CD8-positive, alpha-beta T cell (primary cell): ENCODE measurements at regions of chr21 and their contacts with region 1.

Region 1: GRCh38 chr21:42496122-42496900 is at the start of gene RSPH1:
- DNase-seq: peak; percentile 99 to 100 (median 99)
- ATAC-seq: peak; percentile 96
- H3K4me3 ChIP-seq: peak within 1 kb of the TSS; percentile 70 to 78
- H3K4me3 Mint-ChIP-seq: peak within 1 kb of the TSS; percentile 88
- H3K27ac ChIP-seq: peak within 1 kb of the TSS; percentile 78 to 81
- H3K27ac Mint-ChIP-seq: peak within 1 kb of the TSS; percentile 79
- H3K4me1 ChIP-seq: peaks cover 12% of the 10 kb centered on the region
- H3K4me1 Mint-ChIP-seq: peaks cover 11% of the 10 kb centered on the region
- H3K27me3 ChIP-seq: no peaks in the 10 kb centered on the region
- H3K27me3 Mint-ChIP-seq: no peaks in the 10 kb centered on the region
- CTCF ChIP-seq: no peak
- total RNA-seq, gene RSPH1: 0.16 TPM in 1 of 2 experiments, not detected in the other

Region 2: GRCh38 chr21:42400525-42400924 is 95.8 kb before region 1 on chr21:
- CTCF ChIA-PET with region 1: no interaction called
- POLR2A ChIA-PET with region 1: interaction called, 3 read pairs
- intact Hi-C with region 1: loop called in 1 of 2 experiments (anchors 1 kb)
- DNase-seq: peak in 1 of 9 experiments; percentile 60
- ATAC-seq: no peak
- H3K4me3 ChIP-seq: no peak overlapping the region
- H3K4me3 Mint-ChIP-seq: no peak overlapping the region
- H3K27ac ChIP-seq: no peak overlapping the region
- H3K27ac Mint-ChIP-seq: no peak overlapping the region
- H3K4me1 ChIP-seq: peaks cover 39% of the 10 kb centered on the region
- H3K4me1 Mint-ChIP-seq: peaks cover 57% of the 10 kb centered on the region
- H3K27me3 ChIP-seq: no peaks in the 10 kb centered on the region
- H3K27me3 Mint-ChIP-seq: no peaks in the 10 kb centered on the region
- CTCF ChIP-seq: no peak

Region 3: DNA sequence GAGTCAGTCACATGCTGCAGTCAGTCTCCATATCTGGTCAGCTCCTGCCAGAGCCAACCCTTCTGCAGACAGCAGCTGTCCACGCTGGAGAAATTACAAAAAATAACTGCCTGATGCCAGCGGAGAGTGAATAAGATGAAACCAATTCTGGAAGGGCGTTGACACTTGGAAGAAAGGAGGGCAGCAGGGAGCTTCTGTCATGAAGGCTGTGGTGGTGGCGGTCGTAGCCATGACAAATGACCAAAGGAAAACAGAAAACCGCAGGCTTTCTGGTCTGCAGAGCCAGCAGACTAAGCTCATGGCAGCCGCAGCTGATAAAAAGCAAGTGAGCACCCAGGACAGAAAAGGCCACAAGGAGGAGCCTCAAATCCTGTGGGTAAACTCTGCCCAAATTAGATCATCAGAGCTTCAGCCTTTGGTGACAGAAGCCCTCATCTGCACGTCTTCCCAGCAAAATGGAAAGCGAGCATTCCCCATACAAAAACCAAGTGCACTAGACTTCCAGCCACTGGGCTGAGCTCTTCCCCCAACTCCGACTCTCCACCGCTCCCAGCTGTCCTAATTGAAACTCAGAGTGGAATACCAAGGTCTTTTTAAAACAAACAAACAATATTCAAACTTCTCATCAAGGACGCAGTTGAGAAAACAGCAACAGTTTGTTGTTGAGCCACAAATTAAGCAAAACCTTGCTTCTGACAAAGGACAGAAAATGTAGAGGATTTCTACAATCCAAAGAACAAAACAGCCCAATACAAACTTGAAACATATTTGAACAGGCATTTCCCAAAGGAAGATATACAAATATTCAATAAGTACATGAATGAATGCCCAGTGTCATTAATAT is 28.9 kb before region 1 on chr21:
- CTCF ChIA-PET with region 1: interaction called, 3 read pairs
- POLR2A ChIA-PET with region 1: no interaction called
- intact Hi-C with region 1: loop called in 1 of 2 experiments (anchors 2 kb)
- DNase-seq: peak in 3 of 9 experiments; percentile 36 to 58 (median 38)
- ATAC-seq: no peak
- H3K4me3 ChIP-seq: no peak overlapping the region
- H3K4me3 Mint-ChIP-seq: no peak overlapping the region
- H3K27ac ChIP-seq: no peak overlapping the region
- H3K27ac Mint-ChIP-seq: no peak overlapping the region
- H3K4me1 ChIP-seq: peaks cover 35% of the 10 kb centered on the region
- H3K4me1 Mint-ChIP-seq: peaks cover 37% of the 10 kb centered on the region
- H3K27me3 ChIP-seq: no peaks in the 10 kb centered on the region
- H3K27me3 Mint-ChIP-seq: no peaks in the 10 kb centered on the region
- CTCF ChIP-seq: peak; percentile 27

Region 4: DNA sequence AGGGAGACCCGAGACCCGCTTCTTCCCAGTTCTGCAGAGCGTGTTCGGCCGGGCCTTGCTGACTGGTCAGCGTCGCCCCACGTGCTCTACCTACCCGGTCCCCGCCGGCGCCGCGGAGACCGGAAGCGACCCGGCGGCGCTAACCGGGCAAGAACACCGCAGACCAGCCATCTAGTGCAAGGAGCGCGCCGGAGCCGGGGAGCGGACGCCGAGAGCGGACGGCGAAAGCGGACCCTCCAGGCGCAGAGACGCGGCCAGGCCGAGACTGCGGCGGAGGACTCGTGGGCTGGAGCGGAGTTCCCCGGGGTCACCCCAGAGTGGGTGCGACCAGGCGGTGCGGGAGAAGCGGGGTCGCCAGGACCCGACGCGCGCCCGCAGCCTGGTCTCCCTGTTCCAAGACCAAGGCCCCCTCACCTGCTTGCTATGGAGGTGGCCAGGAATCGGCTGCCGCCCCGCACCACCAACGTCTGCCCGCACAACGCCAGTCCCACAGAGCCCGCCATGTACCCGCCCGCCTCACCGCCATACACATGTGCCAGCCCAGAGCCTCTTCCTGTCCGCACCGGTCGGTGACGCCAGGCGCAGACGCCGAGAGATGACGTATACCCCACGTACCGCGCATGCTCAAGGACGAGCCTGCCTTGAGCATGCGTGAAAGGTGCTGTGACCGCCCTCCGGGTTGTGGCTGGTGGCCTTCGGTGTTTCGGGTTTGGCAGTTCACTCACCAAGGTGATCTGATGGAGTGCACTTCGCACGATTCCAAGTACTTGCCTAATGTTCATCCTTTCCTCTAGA is 382.9 kb after region 1 on chr21 and contains the start of gene WDR4:
- CTCF ChIA-PET with region 1: no interaction called
- POLR2A ChIA-PET with region 1: no interaction called
- intact Hi-C with region 1: loop called in 1 of 2 experiments (anchors 2 kb)
- DNase-seq: peak; percentile 98 to 100 (median 99)
- ATAC-seq: peak; percentile 87
- H3K4me3 ChIP-seq: peak within 1 kb of the TSS; percentile 65 to 85
- H3K4me3 Mint-ChIP-seq: peak within 1 kb of the TSS; percentile 97
- H3K27ac ChIP-seq: peak within 1 kb of the TSS; percentile 76 to 87
- H3K27ac Mint-ChIP-seq: peak within 1 kb of the TSS; percentile 99
- H3K4me1 ChIP-seq: peaks cover 16% of the 10 kb centered on the region
- H3K4me1 Mint-ChIP-seq: peaks cover 30% of the 10 kb centered on the region
- H3K27me3 ChIP-seq: no peaks in the 10 kb centered on the region
- H3K27me3 Mint-ChIP-seq: no peaks in the 10 kb centered on the region
- CTCF ChIP-seq: no peak
- total RNA-seq, gene WDR4: 13.2 to 13.3 TPM

Region 5: GRCh38 chr21:42973991-42974831 is 477.9 kb after region 1 on chr21 and contains the start of gene PKNOX1:
- CTCF ChIA-PET with region 1: no interaction called
- POLR2A ChIA-PET with region 1: no interaction called
- intact Hi-C with region 1: loop called (anchors 2 to 10 kb)
- DNase-seq: peak; percentile 98 to 100 (median 99)
- ATAC-seq: peak; percentile 85
- H3K4me3 ChIP-seq: peak within 1 kb of the TSS; percentile 83 to 87
- H3K4me3 Mint-ChIP-seq: peak within 1 kb of the TSS; percentile 91
- H3K27ac ChIP-seq: peak within 1 kb of the TSS; percentile 81 to 98
- H3K27ac Mint-ChIP-seq: peak within 1 kb of the TSS; percentile 94
- H3K4me1 ChIP-seq: peaks cover 18% of the 10 kb centered on the region
- H3K4me1 Mint-ChIP-seq: peaks cover 22% of the 10 kb centered on the region
- H3K27me3 ChIP-seq: no peaks in the 10 kb centered on the region
- H3K27me3 Mint-ChIP-seq: no peaks in the 10 kb centered on the region
- CTCF ChIP-seq: no peak
- total RNA-seq, gene PKNOX1: 10.3 to 11.1 TPM